CD8-positive, alpha-beta T cell (primary cell): ENCODE measurements at regions of chr5 and their contacts with region 1.

Region 1: DNA sequence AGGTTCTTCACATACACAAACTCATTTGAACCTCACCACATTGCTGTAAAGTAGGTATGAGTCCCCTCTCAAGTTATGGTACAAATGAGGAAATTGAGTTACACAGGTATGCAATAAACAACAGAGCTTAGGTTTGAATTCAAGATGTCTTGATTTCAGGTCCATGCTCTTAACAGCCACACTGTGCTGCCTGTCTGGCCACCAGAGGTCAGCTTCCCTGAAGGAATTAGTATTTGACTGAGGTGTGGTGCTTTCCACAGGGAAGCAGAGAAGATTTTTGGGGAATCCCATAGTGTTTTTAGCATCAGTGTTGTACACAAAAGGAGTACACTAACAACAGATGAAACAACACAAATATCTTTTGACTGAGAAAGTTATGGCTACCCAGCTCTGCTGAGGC is 94.4 kb upstream of the ITGA1 start:
- DNase-seq: peak in 7 of 9 experiments; percentile 14 to 60 (median 46)
- ATAC-seq: peak; percentile 48
- H3K4me3 ChIP-seq: no peak overlapping the region
- H3K4me3 Mint-ChIP-seq: no peak overlapping the region
- H3K27ac ChIP-seq: no peak overlapping the region
- H3K27ac Mint-ChIP-seq: no peak overlapping the region
- H3K4me1 ChIP-seq: no peaks in the 10 kb centered on the region
- H3K4me1 Mint-ChIP-seq: peaks cover 6% of the 10 kb centered on the region
- H3K27me3 ChIP-seq: no peaks in the 10 kb centered on the region
- H3K27me3 Mint-ChIP-seq: no peaks in the 10 kb centered on the region
- CTCF ChIP-seq: peak; percentile 58

Region 2: DNA sequence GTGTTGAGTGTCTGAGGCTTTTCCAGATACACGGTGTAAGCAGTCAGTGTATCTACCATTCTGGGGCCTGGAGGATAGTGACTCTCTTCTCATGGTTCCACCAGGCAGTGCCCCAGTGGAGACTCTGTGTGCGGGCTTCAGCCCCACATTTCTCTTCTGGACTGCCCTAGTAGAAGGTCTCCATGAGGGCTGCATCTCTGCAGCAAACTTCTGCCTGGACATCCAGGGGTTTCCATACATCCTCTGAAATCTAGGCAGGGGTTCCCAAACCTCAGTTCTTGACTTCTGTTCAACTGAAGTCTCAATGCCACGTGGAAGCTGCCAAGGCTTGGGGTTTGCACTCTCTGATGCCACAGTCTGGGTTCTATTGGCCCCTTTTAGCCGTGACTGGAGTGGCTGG is 162.2 kb before region 1 on chr5:
- CTCF ChIA-PET with region 1: no interaction called
- POLR2A ChIA-PET with region 1: no interaction called
- intact Hi-C with region 1: no loop called
- DNase-seq: no peak
- ATAC-seq: no peak
- H3K4me3 ChIP-seq: no peak overlapping the region
- H3K4me3 Mint-ChIP-seq: no peak overlapping the region
- H3K27ac ChIP-seq: no peak overlapping the region
- H3K27ac Mint-ChIP-seq: no peak overlapping the region
- H3K4me1 ChIP-seq: no peaks in the 10 kb centered on the region
- H3K4me1 Mint-ChIP-seq: no peaks in the 10 kb centered on the region
- H3K27me3 ChIP-seq: no peaks in the 10 kb centered on the region
- H3K27me3 Mint-ChIP-seq: peaks cover 8% of the 10 kb centered on the region
- CTCF ChIP-seq: no peak

Region 3: DNA sequence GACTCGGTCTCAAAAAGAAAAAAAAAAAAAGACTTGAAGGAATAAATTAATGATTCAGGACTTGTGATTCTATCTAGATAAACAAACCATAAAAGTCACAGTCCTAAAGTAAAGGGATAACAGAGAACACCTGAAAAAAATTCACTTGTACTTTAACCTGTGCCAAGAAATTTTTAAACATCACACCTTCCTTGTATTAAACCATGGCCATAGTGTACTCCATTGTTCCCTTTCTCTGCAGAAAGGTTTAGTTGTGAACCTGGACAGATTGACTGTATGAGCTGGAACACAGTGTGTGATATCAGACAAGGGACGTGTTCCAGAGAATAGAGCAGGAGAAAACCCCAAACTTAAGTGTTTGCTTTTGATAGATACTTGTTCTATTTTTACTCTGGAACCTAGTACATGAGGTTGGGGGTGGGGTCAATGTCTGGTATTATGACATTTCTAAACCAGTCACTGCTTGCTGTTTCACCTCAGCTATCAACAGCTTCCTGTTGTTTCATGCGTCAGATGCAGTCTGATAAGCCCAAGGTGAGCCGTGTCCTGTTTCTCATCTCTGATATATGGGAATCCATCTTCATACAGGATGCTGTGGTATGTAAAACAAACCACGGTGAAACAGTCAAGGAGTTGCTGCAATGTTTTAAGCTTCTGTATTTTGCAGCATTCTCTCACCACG is 31.9 kb after region 1 on chr5:
- CTCF ChIA-PET with region 1: interaction called, 16 read pairs
- POLR2A ChIA-PET with region 1: no interaction called
- intact Hi-C with region 1: loop called in 1 of 2 experiments (anchors 5 kb)
- DNase-seq: peak; percentile 45 to 92 (median 67)
- ATAC-seq: peak; percentile 95
- H3K4me3 ChIP-seq: no peak overlapping the region
- H3K4me3 Mint-ChIP-seq: peak overlapping the region; percentile 68
- H3K27ac ChIP-seq: peak overlapping the region; percentile 44 to 67
- H3K27ac Mint-ChIP-seq: peak overlapping the region; percentile 95
- H3K4me1 ChIP-seq: peaks cover 35% of the 10 kb centered on the region
- H3K4me1 Mint-ChIP-seq: peaks cover 71% of the 10 kb centered on the region
- H3K27me3 ChIP-seq: no peaks in the 10 kb centered on the region
- H3K27me3 Mint-ChIP-seq: no peaks in the 10 kb centered on the region
- CTCF ChIP-seq: no peak

Region 4: DNA sequence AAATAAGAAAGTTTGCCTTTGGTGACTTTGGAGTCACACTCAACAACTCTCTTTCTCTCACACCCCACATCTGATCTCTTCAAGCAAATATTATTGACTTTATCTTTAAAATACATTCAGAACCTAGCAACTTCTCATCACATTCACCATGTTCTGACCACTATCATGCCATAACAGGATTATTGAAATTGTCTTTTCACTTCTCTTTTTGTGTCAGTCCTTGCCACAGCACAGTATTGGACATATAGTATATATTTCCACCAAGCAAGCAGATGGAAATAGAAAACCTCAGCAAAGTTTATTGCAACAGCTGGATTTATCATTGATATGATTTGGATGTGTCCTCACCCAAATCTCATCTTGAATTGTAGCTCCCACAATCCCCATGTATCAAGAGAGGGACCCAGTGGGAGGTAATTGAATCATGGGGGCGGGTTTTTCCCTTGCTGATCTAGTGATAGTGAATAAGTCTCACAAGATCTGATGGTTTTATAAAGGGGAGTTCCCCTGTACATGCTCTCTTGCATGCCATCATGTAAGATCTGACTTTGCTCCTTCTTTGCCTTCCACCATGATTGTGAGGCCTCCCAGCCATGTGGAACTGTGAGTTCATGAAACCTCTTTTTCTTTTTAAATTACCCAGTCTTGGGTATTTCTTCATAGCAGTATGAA is 67.6 kb after region 1 on chr5:
- CTCF ChIA-PET with region 1: no interaction called
- POLR2A ChIA-PET with region 1: no interaction called
- intact Hi-C with region 1: no loop called
- DNase-seq: no peak
- ATAC-seq: no peak
- H3K4me3 ChIP-seq: no peak overlapping the region
- H3K4me3 Mint-ChIP-seq: no peak overlapping the region
- H3K27ac ChIP-seq: no peak overlapping the region
- H3K27ac Mint-ChIP-seq: no peak overlapping the region
- H3K4me1 ChIP-seq: no peaks in the 10 kb centered on the region
- H3K4me1 Mint-ChIP-seq: peaks cover 11% of the 10 kb centered on the region
- H3K27me3 ChIP-seq: no peaks in the 10 kb centered on the region
- H3K27me3 Mint-ChIP-seq: no peaks in the 10 kb centered on the region
- CTCF ChIP-seq: no peak

Region 5: GRCh38 chr5:52787600-52788504 is 94.6 kb after region 1 on chr5 and contains the starts of genes ITGA1 and PELO:
- CTCF ChIA-PET with region 1: interaction called, 25 read pairs
- POLR2A ChIA-PET with region 1: no interaction called
- intact Hi-C with region 1: loop called (anchors 2 kb)
- DNase-seq: peak in 8 of 9 experiments; percentile 21 to 81 (median 60)
- ATAC-seq: peak; percentile 79
- H3K4me3 ChIP-seq: peak within 1 kb of the TSS; percentile 69 to 83
- H3K4me3 Mint-ChIP-seq: peak within 1 kb of the TSS; percentile 94
- H3K27ac ChIP-seq: peak within 1 kb of the TSS in 1 of 2 experiments; percentile 35
- H3K27ac Mint-ChIP-seq: peak within 1 kb of the TSS; percentile 87
- H3K4me1 ChIP-seq: peaks cover 8% of the 10 kb centered on the region
- H3K4me1 Mint-ChIP-seq: peaks cover 39% of the 10 kb centered on the region
- H3K27me3 ChIP-seq: peaks cover 0 to 4% of the 10 kb centered on the region in 2 experiments
- H3K27me3 Mint-ChIP-seq: no peaks in the 10 kb centered on the region
- CTCF ChIP-seq: peak; percentile 36
- total RNA-seq, gene ITGA1: 4.6 to 7.3 TPM
- total RNA-seq, gene PELO: 13.4 to 13.7 TPM

Region 6: DNA sequence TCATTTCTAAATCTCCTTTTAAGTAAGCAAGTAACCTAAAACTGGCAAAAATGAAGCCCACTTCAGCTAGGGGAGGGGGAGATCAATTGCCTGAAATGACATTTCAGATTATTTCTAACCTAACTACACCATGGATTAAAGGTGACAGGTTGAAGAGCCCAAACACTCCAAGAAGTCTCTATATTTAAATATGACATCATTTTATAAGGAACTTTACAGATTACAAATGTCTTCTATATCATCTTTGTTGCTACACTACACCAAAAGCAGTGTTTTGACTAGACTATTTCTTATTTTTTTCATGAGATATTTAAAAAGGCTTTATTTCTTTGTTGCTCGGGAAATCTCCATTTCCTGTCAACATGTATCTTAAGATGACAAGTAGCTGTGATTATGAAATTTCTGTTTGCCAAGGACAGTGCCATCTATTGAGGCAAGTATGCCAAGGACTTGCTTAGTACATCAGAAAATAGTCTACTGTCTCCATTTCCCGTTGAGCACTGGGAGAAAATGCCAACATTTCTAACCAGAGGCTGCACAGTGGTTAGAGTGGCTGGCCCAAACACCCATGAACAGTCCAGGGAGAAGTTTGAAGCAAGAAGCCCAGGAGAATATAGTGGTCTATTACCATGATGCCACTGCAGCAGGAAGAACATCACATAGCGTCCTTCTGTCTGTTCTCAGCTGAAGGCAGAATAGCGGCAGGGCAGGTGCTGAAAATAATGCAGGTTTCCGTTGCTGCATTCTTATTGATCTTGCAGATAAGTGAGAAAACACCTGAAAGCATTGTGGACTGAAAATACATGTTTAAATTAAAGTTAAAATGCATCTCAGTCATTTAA is 202.5 kb after region 1 on chr5:
- CTCF ChIA-PET with region 1: interaction called, 11 read pairs
- POLR2A ChIA-PET with region 1: no interaction called
- intact Hi-C with region 1: no loop called
- DNase-seq: peak in 1 of 9 experiments; percentile 9
- ATAC-seq: no peak
- H3K4me3 ChIP-seq: no peak overlapping the region
- H3K4me3 Mint-ChIP-seq: no peak overlapping the region
- H3K27ac ChIP-seq: no peak overlapping the region
- H3K27ac Mint-ChIP-seq: peak overlapping the region; percentile 56
- H3K4me1 ChIP-seq: no peaks in the 10 kb centered on the region
- H3K4me1 Mint-ChIP-seq: peaks cover 11% of the 10 kb centered on the region
- H3K27me3 ChIP-seq: no peaks in the 10 kb centered on the region
- H3K27me3 Mint-ChIP-seq: no peaks in the 10 kb centered on the region
- CTCF ChIP-seq: no peak

Region 7: DNA sequence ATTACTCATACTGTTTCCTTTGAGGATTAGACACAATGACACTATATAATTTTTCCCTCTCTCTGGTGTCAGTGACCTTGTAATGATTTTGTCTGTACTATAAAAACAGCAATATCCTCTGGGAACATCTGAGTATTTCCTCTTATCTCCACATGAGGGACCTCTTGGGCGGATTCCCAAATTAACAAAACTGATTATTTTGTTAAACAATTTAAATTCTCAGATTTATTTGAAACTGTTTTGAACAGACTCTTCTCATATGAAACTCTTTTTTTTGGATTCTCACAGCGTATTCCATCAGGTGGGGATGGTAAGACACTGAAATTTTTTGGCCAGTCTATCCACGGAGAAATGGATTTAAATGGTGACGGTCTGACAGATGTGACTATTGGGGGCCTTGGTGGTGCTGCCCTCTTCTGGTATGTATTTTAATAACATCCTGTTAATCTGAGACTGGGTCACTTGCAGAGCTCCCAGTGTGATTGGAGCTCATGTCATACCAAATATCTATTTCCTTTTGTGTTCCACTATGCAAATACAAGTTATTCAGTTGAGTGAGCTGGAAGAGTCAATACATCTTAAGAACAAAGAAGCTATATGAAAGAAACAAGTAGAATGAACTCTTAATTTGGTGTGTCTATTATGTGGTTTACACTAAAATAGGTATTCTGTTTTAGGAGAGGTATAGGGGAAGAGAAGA is 222.0 kb after region 1 on chr5:
- CTCF ChIA-PET with region 1: interaction called, 48 read pairs
- POLR2A ChIA-PET with region 1: no interaction called
- intact Hi-C with region 1: loop called (anchors 1 kb)
- DNase-seq: peak; percentile 10 to 76 (median 45)
- ATAC-seq: peak; percentile 97
- H3K4me3 ChIP-seq: no peak overlapping the region
- H3K4me3 Mint-ChIP-seq: peak overlapping the region; percentile 50
- H3K27ac ChIP-seq: no peak overlapping the region
- H3K27ac Mint-ChIP-seq: no peak overlapping the region
- H3K4me1 ChIP-seq: no peaks in the 10 kb centered on the region
- H3K4me1 Mint-ChIP-seq: peaks cover 6% of the 10 kb centered on the region
- H3K27me3 ChIP-seq: no peaks in the 10 kb centered on the region
- H3K27me3 Mint-ChIP-seq: no peaks in the 10 kb centered on the region
- CTCF ChIP-seq: peak; percentile 88